IMR-90 (cell line): ENCODE measurements at regions of chr10 and their contacts with region 1.

Region 1: DNA sequence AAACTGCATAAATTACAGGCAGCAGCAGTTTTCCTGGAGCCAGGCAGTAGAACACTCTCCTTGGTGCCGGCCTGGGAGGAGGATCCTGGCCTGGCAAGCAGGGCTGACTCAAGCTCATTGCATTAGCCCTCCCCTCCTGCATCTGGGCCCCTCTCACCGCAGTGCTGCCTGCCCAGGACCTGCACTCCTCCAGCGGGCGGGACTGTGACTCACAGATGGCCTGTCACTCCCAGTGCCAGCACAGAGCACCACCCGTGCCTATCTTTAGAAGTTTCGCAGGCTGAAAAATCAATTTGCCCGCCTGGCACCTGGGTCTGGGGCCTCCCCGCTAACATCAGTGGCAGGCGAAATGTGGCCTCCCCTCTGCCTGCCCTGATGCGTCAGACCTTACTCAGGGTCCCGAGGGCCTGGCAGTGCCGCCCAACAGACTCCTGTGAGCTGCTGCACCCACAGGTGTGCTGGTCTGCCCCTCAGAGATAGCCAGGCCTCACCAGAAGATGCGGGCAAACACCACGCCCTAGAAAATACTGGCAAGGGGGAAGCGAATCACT is 123.8 kb downstream of the KCNMA1 start:
- DNase-seq: peak; percentile 91
- ATAC-seq: peak; percentile 98
- H3K4me3 ChIP-seq: no peak overlapping the region
- H3K27ac ChIP-seq: no peak overlapping the region
- H3K4me1 ChIP-seq: peaks cover 22% of the 10 kb centered on the region
- H3K27me3 ChIP-seq: no peaks in the 10 kb centered on the region
- CTCF ChIP-seq: no peak
- POLR2A ChIP-seq: no peak
- RAD21 ChIP-seq: peak; percentile 29

Region 2: DNA sequence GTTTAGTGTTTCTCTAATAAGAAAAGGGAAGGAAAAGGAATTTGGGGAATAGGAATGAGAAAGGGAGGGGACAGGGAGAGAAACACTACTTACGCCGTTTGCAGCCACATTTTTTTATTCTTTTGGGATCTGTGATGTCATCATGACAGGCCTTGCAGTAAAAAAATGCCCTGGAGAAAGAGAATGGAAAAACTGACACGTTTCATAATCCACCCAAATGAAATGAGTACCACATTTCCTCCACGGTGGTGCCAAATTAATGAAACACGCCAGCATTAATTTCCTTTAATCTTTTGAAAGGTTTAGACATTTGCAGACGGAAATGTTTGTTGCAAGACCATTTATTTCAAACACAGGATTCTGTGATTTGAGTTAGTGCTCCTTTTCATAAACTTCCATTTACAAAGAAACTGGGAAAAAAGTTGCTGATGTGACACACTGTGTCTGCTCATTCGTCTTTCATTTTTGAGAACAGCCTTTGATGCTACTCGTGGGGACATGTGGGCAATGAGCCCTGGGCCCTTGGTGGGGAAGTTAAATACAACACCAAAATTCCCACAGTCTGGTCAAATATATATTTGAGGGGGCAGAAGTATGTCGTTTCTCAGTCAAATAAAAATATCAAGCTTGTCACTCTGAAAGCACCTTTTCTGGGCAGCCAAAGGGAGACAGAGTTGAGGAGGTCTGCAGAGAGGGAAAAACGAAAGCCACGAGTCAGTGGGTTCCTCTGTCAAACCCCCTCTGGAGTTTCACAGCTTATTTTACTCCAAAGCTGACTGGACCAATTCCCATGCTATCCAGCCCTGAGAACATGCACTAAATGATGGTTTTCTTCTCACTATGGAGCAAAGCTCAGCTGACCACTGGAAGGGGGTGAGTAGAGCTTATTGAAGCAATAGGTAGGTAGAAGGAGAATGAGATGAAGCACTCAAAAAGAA is 501.7 kb before region 1 on chr10:
- CTCF ChIA-PET with region 1: no interaction called
- POLR2A ChIA-PET with region 1: no interaction called
- dilution Hi-C with region 1: no loop called
- in situ Hi-C with region 1: no loop called
- intact Hi-C with region 1: no loop called
- DNase-seq: no peak
- ATAC-seq: no peak
- H3K4me3 ChIP-seq: no peak overlapping the region
- H3K27ac ChIP-seq: no peak overlapping the region
- H3K4me1 ChIP-seq: no peaks in the 10 kb centered on the region; the same call in 1 of the 2 replicates
- H3K27me3 ChIP-seq: no peaks in the 10 kb centered on the region; the same call in 1 of the 2 replicates
- CTCF ChIP-seq: no peak
- POLR2A ChIP-seq: no peak
- RAD21 ChIP-seq: no peak

Region 3: GRCh38 chr10:77165445-77166208 is 348.2 kb before region 1 on chr10:
- CTCF ChIA-PET with region 1: no interaction called
- POLR2A ChIA-PET with region 1: no interaction called
- dilution Hi-C with region 1: no loop called
- in situ Hi-C with region 1: no loop called
- intact Hi-C with region 1: loop called (anchors 5 kb)
- DNase-seq: peak; percentile 71
- ATAC-seq: peak; percentile 55
- H3K4me3 ChIP-seq: no peak overlapping the region
- H3K27ac ChIP-seq: no peak overlapping the region
- H3K4me1 ChIP-seq: peaks cover 15% of the 10 kb centered on the region
- H3K27me3 ChIP-seq: no peaks in the 10 kb centered on the region
- CTCF ChIP-seq: peak; percentile 82
- POLR2A ChIP-seq: no peak
- RAD21 ChIP-seq: peak; percentile 86

Region 4: GRCh38 chr10:77212632-77213031 is 301.2 kb before region 1 on chr10:
- CTCF ChIA-PET with region 1: no interaction called
- POLR2A ChIA-PET with region 1: no interaction called
- dilution Hi-C with region 1: no loop called
- in situ Hi-C with region 1: no loop called
- intact Hi-C with region 1: no loop called
- DNase-seq: no peak
- ATAC-seq: no peak
- H3K4me3 ChIP-seq: no peak overlapping the region
- H3K27ac ChIP-seq: no peak overlapping the region
- H3K4me1 ChIP-seq: no peaks in the 10 kb centered on the region
- H3K27me3 ChIP-seq: no peaks in the 10 kb centered on the region
- CTCF ChIP-seq: no peak
- POLR2A ChIP-seq: no peak
- RAD21 ChIP-seq: no peak

Region 5: GRCh38 chr10:77428691-77429395 is 85.0 kb before region 1 on chr10:
- CTCF ChIA-PET with region 1: no interaction called
- POLR2A ChIA-PET with region 1: no interaction called
- dilution Hi-C with region 1: no loop called
- in situ Hi-C with region 1: no loop called
- intact Hi-C with region 1: loop called (anchors 5 kb)
- DNase-seq: peak; percentile 82
- ATAC-seq: peak; percentile 89
- H3K4me3 ChIP-seq: no peak overlapping the region
- H3K27ac ChIP-seq: no peak overlapping the region
- H3K4me1 ChIP-seq: 0 out of 2 replicates have a peak, but pooled peaks cover 2% of the 10 kb centered on the region
- H3K27me3 ChIP-seq: no peaks in the 10 kb centered on the region
- CTCF ChIP-seq: peak; percentile 83
- POLR2A ChIP-seq: no peak
- RAD21 ChIP-seq: peak; percentile 72

Region 6: DNA sequence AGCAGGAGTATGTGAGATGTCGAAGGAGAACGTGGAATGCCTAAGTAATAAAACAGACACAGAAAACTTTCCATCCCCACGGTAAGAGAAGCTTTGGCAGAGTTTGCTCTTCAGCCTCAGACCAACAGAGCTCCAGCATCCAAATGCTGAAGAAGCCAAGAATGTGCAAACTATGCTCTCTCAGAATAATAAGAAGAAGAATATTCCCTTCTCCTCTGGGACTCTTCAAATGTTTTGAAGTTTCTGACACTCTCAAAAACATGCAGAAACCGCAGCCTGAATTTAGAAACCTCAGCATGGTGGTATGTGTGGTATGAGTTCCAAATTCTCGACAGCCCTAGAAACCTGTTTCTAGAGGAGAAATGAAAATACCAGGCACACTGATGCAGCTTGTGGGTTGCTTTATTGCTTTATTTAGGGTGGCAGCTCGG is 10.4 kb after region 1 on chr10:
- CTCF ChIA-PET with region 1: interaction called, 6 read pairs
- POLR2A ChIA-PET with region 1: no interaction called
- dilution Hi-C with region 1: no loop called
- in situ Hi-C with region 1: no loop called
- intact Hi-C with region 1: loop called (anchors 1 kb)
- DNase-seq: peak; percentile 87
- ATAC-seq: peak; percentile 89
- H3K4me3 ChIP-seq: no peak overlapping the region
- H3K27ac ChIP-seq: peak overlapping the region; percentile 52; the same call in 1 of the 2 replicates
- H3K4me1 ChIP-seq: peaks cover 22% of the 10 kb centered on the region
- H3K27me3 ChIP-seq: no peaks in the 10 kb centered on the region
- CTCF ChIP-seq: no peak
- POLR2A ChIP-seq: no peak
- RAD21 ChIP-seq: no peak; the same call in 1 of the 2 replicates

Region 7: DNA sequence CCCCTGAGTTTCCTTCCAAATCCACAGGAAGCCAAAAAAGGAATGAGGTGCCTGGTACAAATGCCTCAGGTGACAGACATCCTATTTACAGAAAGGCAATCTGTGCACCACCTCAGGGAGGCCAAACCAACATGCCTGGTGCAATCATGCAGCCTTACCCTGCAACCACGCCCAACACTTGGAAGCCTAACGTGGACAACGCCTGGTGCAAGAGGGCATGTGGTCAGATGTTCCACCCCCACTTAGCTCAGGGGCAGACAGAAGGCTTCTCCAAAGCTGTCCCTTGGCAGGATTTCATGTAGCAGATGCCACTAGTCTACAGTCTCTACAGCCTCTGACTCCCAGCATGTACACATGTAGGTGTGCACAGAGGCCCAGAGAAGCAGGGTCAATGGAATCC is 34.3 kb after region 1 on chr10:
- CTCF ChIA-PET with region 1: no interaction called
- POLR2A ChIA-PET with region 1: no interaction called
- dilution Hi-C with region 1: no loop called
- in situ Hi-C with region 1: no loop called
- intact Hi-C with region 1: no loop called
- DNase-seq: no peak
- ATAC-seq: no peak
- H3K4me3 ChIP-seq: no peak overlapping the region
- H3K27ac ChIP-seq: no peak overlapping the region
- H3K4me1 ChIP-seq: no peaks in the 10 kb centered on the region
- H3K27me3 ChIP-seq: no peaks in the 10 kb centered on the region
- CTCF ChIP-seq: no peak
- POLR2A ChIP-seq: no peak
- RAD21 ChIP-seq: no peak